ENCODE measurements at regions of chr2 and their contacts with region 1.

Region 1: DNA sequence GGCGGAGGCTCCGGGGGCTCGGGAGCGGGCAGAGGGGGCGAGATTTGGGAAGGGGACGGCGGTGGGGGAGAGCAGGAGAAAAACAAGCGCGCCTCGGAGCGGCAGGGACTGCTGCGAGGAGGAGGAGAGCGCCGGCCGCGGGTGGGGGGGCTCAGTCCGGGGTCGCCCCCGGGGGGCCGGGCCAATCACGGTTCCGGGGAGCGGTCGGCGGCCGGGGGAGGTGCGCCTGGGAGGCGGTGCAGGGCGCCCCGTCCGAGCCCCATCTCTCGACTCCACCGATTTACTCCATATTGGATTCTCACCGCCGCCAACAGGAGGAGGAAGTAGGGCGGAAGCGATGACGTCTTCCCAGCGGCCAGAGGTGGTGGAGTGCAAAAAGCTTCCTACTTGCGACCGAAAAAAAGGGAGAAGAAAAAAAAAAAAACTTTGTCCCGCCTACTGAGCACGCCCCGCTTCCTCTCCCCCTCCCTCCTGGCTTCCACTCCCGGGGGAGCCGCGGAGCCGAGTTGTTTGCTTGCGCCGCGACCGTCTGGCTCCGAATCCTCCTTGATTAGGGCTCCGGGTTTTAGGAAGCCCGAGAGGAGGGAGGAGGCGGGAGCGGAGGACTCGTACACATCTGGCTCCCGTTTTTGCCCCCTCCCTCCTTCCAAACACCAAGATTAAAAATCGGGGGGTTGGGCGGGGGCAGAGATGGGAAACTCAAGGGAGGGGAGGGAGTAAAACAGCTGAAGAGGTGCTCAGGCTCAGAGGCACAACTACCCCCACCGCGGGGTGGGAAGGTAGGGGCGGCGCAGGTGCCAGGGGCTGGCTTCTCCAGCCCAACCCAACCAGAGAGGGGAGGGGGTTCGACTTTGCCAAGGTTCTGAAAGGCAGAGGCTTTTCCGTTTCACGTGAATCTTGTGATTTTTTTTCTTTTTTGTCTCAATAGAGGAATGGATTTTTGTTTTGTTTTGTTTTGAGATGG is at the start of gene SPRED2:
- DNase-seq: peak; percentile 85 to 89
- ATAC-seq: peak; percentile 42 to 44
- H3K4me3 ChIP-seq: peak within 1 kb of the TSS; percentile 79 to 88 (median 84)
- H3K27ac ChIP-seq: peak within 1 kb of the TSS; percentile 75 to 88 (median 84)
- H3K4me1 ChIP-seq: peaks cover 22 to 23% of the 10 kb centered on the region in 2 donors
- H3K27me3 ChIP-seq: no peaks in the 10 kb centered on the region
- CTCF ChIP-seq: peak in 1 of 5 experiments; percentile 25
- POLR2A ChIP-seq: peak; percentile 70 to 81
- total RNA-seq, gene SPRED2: 4.1 to 12.5 (median 7.4) TPM

Region 2: DNA sequence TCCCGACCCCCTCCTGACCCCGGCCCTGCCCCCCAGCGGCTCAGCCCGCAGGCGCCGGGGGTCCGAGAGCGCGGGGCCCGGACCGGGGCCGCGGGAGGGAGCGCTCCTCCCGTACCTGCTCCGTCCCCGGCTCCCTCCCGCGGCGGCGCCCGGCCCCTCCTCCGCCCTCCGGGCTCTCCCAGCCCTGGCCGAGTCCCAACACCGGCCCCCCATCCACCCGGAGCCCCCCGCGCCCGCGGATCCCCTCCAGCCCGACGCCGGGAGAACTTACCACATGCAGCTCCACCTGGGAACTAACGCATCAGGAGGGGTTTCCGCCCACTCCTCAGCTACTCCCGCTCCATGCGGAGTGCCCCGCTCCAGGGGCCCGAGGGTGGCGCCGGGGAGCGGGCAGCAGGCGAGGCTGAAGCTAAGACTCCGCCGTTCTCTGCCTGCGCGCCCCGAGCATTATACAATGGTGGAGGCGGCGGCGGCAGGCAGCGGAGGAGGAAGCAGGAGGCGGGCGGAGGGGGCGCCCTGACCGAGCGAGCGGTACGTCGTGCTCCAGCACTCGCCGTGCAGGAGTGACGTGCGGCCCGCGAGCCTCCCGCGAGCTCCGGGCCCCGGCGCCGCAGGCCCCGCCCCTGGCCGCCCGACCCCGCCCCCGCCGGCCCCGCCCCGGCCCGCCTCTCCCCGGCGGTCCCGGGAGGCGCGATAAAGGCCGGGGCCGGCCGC is 779.0 kb before region 1 on chr2 and contains the start of gene SERTAD2:
- in situ Hi-C with region 1: no loop called
- intact Hi-C with region 1: loop called (anchors 10 kb)
- DNase-seq: peak; percentile 74 to 84
- ATAC-seq: peak; percentile 64 to 70
- H3K4me3 ChIP-seq: peak within 1 kb of the TSS; percentile 87 to 95 (median 90)
- H3K27ac ChIP-seq: peak within 1 kb of the TSS; percentile 96 to 100 (median 99)
- H3K4me1 ChIP-seq: peaks cover 41% of the 10 kb centered on the region in 2 donors
- H3K27me3 ChIP-seq: no peaks in the 10 kb centered on the region
- CTCF ChIP-seq: peak in 2 of 5 experiments; percentile 17 to 35
- POLR2A ChIP-seq: peak; percentile 92 to 95
- total RNA-seq, gene SERTAD2: 7.3 to 10.6 (median 8.7) TPM

Region 3: GRCh38 chr2:64988420-64989125 is 443.9 kb before region 1 on chr2:
- in situ Hi-C with region 1: no loop called
- intact Hi-C with region 1: loop called (anchors 5 kb)
- DNase-seq: peak; percentile 70 to 82
- ATAC-seq: peak; percentile 60 to 77
- H3K4me3 ChIP-seq: peak overlapping the region; percentile 73 to 99 (median 92)
- H3K27ac ChIP-seq: peak overlapping the region; percentile 89 to 97 (median 96)
- H3K4me1 ChIP-seq: peaks cover 49 to 52% of the 10 kb centered on the region in 2 donors
- H3K27me3 ChIP-seq: no peaks in the 10 kb centered on the region
- CTCF ChIP-seq: peak; percentile 40 to 62 (median 55)
- POLR2A ChIP-seq: peak; percentile 62 to 69

Region 4: DNA sequence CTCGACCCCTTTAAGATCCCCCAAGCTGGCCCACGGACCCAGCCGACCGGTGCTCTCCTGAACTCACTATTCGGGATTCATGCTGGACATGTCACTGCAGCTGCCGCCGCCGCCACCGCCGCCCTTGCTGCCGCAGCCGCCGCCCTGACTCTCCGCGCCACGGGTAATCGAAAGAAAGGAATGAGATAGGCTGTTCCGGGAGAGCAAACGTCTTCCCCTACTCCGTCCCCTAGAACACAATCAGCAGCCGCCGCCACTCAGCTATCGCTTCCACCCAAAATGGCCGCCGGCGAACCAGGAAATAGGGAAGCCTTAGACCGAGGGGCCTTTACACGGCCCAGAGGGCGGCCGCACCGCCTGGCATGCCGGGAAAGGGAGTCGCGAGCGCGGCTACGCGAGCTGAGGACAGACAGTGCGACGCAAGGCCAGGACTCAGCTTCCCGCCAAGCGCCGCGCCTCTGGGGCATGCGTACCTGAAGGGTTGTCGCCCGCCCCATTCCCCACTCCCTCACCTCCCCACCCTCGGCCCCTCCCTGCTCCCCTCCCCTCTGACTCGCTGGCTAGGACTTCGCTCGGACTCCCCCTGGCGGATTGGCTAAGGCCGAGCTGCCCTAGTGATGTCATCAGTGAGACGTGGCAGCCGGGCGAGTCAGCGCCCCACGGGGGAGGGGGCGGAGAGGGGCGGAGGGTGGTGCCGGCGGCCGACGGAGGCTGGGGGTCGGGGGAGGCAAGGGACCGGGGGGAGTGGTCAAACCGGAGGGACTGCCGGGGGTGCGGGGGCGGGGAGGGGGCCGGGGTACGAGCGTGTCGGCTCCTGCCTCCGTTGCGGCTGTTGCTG is 302.5 kb before region 1 on chr2 and contains the start of gene RAB1A:
- in situ Hi-C with region 1: loop called in 1 of 4 experiments (anchors 10 kb)
- intact Hi-C with region 1: loop called (anchors 1 kb)
- DNase-seq: peak; percentile 100
- ATAC-seq: peak; percentile 83 to 86
- H3K4me3 ChIP-seq: peak within 1 kb of the TSS; percentile 80 to 100 (median 88)
- H3K27ac ChIP-seq: peak within 1 kb of the TSS; percentile 97 to 100 (median 98)
- H3K4me1 ChIP-seq: peaks cover 38 to 40% of the 10 kb centered on the region in 2 donors
- H3K27me3 ChIP-seq: no peaks in the 10 kb centered on the region
- CTCF ChIP-seq: peak in 3 of 5 experiments; percentile 49 to 68 (median 63)
- POLR2A ChIP-seq: peak; percentile 95 to 96
- total RNA-seq, gene RAB1A: 36.4 to 71.3 (median 43.7) TPM

Region 5: GRCh38 chr2:65300761-65301711 is 131.5 kb before region 1 on chr2:
- in situ Hi-C with region 1: no loop called
- intact Hi-C with region 1: loop called (anchors 2 kb)
- DNase-seq: peak in 1 of 2 donors; percentile 33
- ATAC-seq: peak; percentile 31 to 38
- H3K4me3 ChIP-seq: peak overlapping the region in 1 of 4 donors; percentile 5
- H3K27ac ChIP-seq: peak overlapping the region; percentile 50 to 71 (median 62)
- H3K4me1 ChIP-seq: peaks cover 28 to 31% of the 10 kb centered on the region in 2 donors
- H3K27me3 ChIP-seq: no peaks in the 10 kb centered on the region
- CTCF ChIP-seq: no peak
- POLR2A ChIP-seq: no peak

Region 6: DNA sequence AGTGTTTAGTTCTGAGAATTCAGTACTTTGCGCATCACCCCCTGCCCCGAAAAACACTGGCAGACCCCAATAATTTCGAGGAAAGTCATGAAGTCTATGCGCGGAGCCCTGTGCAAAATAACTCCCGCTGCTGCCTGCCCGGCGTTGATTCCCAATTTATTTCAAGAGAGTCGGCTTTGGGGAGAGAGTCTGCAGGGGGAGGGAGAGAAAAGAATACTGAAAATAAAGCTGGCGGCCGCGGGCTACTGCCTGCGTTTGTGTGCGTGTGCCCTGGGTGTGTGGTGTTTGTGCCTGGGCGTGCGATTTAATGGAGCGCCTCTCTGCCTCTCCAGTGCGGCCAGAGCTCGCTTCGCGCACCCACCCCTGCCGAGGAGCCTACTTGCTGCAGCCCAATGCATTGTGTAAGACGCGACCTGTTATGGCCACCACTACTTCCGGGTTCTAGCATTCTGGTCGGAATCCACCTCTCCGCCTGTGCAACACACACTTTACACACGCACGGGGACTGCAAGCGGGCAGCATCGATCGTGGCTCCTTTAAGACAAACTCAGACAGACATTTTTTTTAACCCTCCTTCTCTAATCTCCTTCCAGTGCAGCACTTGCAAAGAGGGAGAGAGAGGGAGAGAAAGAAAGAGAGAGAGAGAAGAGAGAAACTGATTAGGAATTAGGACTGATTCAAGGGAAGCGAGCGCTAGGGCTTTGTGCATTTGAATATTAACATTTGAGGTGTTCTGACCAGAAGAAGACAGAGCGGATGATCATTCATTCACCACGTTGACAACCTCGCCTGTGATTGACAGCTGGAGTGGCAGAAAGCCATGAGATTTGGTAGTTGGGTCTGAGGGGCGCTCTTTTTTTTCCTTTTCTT is 1002.4 kb after region 1 on chr2 and contains the start of gene MEIS1:
- in situ Hi-C with region 1: no loop called
- intact Hi-C with region 1: loop called (anchors 10 kb)
- DNase-seq: peak; percentile 91
- ATAC-seq: peak; percentile 82 to 83
- H3K4me3 ChIP-seq: peak within 1 kb of the TSS; percentile 80 to 96 (median 88)
- H3K27ac ChIP-seq: peak within 1 kb of the TSS; percentile 83 to 89 (median 87)
- H3K4me1 ChIP-seq: peaks cover 0 to 18% of the 10 kb centered on the region in 2 donors
- H3K27me3 ChIP-seq: no peaks in the 10 kb centered on the region
- CTCF ChIP-seq: no peak
- POLR2A ChIP-seq: peak; percentile 69 to 81
- total RNA-seq, gene MEIS1: 1.3 to 8.2 (median 2.0) TPM